ENCODE measurements at regions of chr17 and their contacts with region 1.

Region 1: DNA sequence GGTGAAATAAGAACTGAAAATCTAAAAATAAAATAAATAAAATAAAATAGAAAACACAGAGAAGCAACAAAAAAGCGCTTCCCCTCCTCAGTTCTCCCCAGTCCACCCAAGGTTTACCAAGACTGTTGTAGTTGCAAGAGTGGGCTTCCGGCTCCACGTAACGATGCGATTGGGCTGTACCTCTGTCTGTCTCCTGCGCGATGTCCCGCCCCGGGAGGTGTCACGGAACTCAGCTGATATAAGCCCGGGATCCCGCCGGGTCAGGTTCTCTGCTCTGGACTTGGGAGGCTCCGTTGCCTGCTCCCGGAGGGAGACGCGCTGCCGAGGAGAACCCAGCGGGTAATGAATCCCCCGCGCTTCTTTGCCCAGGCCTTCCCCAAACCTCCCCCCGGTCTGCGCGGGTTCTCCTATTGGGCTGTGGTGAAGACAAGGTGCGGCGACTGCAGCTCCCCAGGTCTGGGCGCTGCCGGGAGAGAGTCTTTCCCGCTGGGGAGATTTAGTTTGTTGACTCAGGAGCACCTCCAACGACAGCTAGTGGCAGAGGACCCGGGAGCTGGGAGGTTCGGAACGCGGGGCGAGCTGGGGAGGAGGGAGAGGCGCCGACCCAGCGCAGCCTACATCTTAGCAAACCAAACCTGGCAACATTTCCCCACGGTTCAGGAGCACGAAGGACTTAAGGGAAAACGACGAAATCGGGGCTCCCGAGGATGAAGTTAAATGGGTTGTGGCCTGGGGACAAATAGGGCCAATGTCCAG is at the start of gene SLFN5:
- DNase-seq: peak; percentile 94 to 96 (median 94)
- ATAC-seq: peak; percentile 96 to 98 (median 97)
- H3K4me3 ChIP-seq: peak within 1 kb of the TSS; percentile 50 to 95 (median 74)
- H3K27ac ChIP-seq: peak within 1 kb of the TSS; percentile 84 to 97 (median 94)
- H3K4me1 ChIP-seq: peaks cover 0 to 51% (median 19%) of the 10 kb centered on the region in 12 donors
- H3K27me3 ChIP-seq: no peaks in the 10 kb centered on the region
- CTCF ChIP-seq: no peak
- POLR2A ChIP-seq: peak in 1 of 2 donors; percentile 93
- total RNA-seq, gene SLFN5: 12.4 to 41.4 (median 15.0) TPM

Region 2: DNA sequence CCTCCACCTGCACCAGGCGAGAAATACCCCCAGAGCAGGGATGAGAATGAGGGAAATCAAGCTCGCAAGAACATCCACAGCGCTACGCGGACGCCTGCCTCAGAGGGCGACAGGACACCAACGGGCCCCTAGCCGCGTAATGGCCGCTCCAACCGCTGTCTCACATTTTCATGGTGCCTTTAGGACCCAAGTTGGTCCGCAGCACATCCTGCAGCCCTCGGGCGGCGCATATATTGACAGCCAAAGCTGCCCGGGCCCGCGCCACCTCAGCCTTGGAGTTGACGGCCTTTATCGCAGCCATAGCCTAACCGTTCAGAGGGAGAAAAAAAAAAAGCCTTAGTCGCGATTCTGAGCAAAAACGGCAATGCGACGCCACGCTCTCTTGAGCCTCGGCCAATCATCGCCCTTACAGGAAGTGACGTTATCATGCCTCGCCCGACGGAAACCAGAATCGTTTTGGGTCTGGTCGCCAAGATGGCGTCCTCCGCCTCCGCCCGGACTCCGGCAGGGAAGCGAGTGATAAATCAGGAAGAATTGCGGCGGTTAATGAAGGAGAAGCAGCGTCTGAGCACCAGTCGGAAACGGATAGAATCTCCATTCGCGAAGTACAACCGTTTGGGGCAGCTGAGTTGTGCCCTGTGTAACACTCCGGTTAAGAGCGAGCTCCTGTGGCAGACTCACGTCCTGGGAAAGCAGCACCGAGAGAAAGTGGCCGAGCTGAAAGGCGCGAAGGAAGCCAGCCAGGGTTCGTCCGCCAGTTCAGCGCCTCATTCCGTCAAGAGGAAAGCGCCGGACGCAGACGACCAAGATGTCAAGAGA is 281.7 kb before region 1 on chr17 and contains the starts of genes CCT6B and ZNF830:
- intact Hi-C with region 1: loop called in 2 of 10 experiments (anchors 5 kb)
- DNase-seq: peak; percentile 93 to 95 (median 93)
- ATAC-seq: peak; percentile 97 to 99 (median 98)
- H3K4me3 ChIP-seq: peak within 1 kb of the TSS; percentile 46 to 97 (median 88)
- H3K27ac ChIP-seq: peak within 1 kb of the TSS; percentile 90 to 98 (median 96)
- H3K4me1 ChIP-seq: peaks cover 0 to 27% (median 21%) of the 10 kb centered on the region in 12 donors
- H3K27me3 ChIP-seq: no peaks in the 10 kb centered on the region
- CTCF ChIP-seq: peak in 2 of 12 donors; percentile 4 to 5
- POLR2A ChIP-seq: peak in 1 of 2 donors; percentile 58
- total RNA-seq, gene CCT6B: 0.75 to 2.5 (median 1.9) TPM
- total RNA-seq, gene ZNF830: 5.7 to 10.1 (median 7.9) TPM

Region 3: GRCh38 chr17:35141681-35142466 is 101.1 kb before region 1 on chr17 and contains the start of gene NLE1:
- intact Hi-C with region 1: loop called in 3 of 10 experiments (anchors 1 to 5 kb)
- DNase-seq: peak; percentile 81 to 91 (median 84)
- ATAC-seq: peak; percentile 74 to 93 (median 90)
- H3K4me3 ChIP-seq: peak within 1 kb of the TSS; percentile 40 to 88 (median 81)
- H3K27ac ChIP-seq: peak within 1 kb of the TSS in 3 of 12 donors; percentile 3 to 47 (median 29)
- H3K4me1 ChIP-seq: peaks cover 0 to 25% (median 15%) of the 10 kb centered on the region in 12 donors
- H3K27me3 ChIP-seq: no peaks in the 10 kb centered on the region
- CTCF ChIP-seq: peak in 11 of 12 donors; percentile 89 to 98 (median 94)
- POLR2A ChIP-seq: peak in 1 of 2 donors; percentile 34
- total RNA-seq, gene NLE1: 2.8 to 8.0 (median 4.2) TPM

Region 4: GRCh38 chr17:35170968-35171771 is 71.8 kb before region 1 on chr17:
- intact Hi-C with region 1: loop called in 2 of 10 experiments (anchors 5 to 10 kb)
- DNase-seq: no peak
- ATAC-seq: peak in 2 of 4 donors; percentile 14 to 23
- H3K4me3 ChIP-seq: no peak overlapping the region
- H3K27ac ChIP-seq: no peak overlapping the region
- H3K4me1 ChIP-seq: peaks cover 0 to 11% (median 0%) of the 10 kb centered on the region in 12 donors
- H3K27me3 ChIP-seq: no peaks in the 10 kb centered on the region
- CTCF ChIP-seq: peak in 9 of 12 donors; percentile 13 to 53 (median 33)
- POLR2A ChIP-seq: no peak

Region 5: GRCh38 chr17:35286120-35286781 is 43.3 kb after region 1 on chr17:
- intact Hi-C with region 1: no loop called
- DNase-seq: no peak
- ATAC-seq: no peak
- H3K4me3 ChIP-seq: no peak overlapping the region
- H3K27ac ChIP-seq: no peak overlapping the region
- H3K4me1 ChIP-seq: peaks cover 0 to 13% (median 0%) of the 10 kb centered on the region in 12 donors
- H3K27me3 ChIP-seq: peaks cover 0 to 8% (median 0%) of the 10 kb centered on the region in 9 donors
- CTCF ChIP-seq: no peak
- POLR2A ChIP-seq: no peak

Region 6: GRCh38 chr17:35373534-35373983 is 130.6 kb after region 1 on chr17 and contains the start of gene SLFN11:
- intact Hi-C with region 1: loop called in 1 of 10 experiments (anchors 10 kb)
- DNase-seq: peak; percentile 90 to 92 (median 91)
- ATAC-seq: peak; percentile 91 to 98 (median 93)
- H3K4me3 ChIP-seq: peak within 1 kb of the TSS; percentile 27 to 82 (median 72)
- H3K27ac ChIP-seq: peak within 1 kb of the TSS; percentile 92 to 98 (median 95)
- H3K4me1 ChIP-seq: peaks cover 0 to 65% (median 13%) of the 10 kb centered on the region in 12 donors
- H3K27me3 ChIP-seq: peaks cover 0 to 20% (median 0%) of the 10 kb centered on the region in 9 donors
- CTCF ChIP-seq: no peak
- POLR2A ChIP-seq: peak; percentile 84 to 98
- total RNA-seq, gene SLFN11: 15.3 to 46.0 (median 17.5) TPM

Region 7: GRCh38 chr17:35432176-35433074 is 189.4 kb after region 1 on chr17 and contains the start of gene SLFN12:
- intact Hi-C with region 1: loop called in 2 of 10 experiments (anchors 2 to 5 kb)
- DNase-seq: peak in 4 of 5 donors; percentile 61 to 74 (median 68)
- ATAC-seq: peak; percentile 70 to 93 (median 89)
- H3K4me3 ChIP-seq: peak within 1 kb of the TSS; percentile 49 to 81 (median 68)
- H3K27ac ChIP-seq: peak within 1 kb of the TSS; percentile 86 to 97 (median 93)
- H3K4me1 ChIP-seq: peaks cover 0 to 42% (median 19%) of the 10 kb centered on the region in 12 donors
- H3K27me3 ChIP-seq: no peaks in the 10 kb centered on the region
- CTCF ChIP-seq: no peak
- POLR2A ChIP-seq: peak in 1 of 2 donors; percentile 51
- total RNA-seq, gene SLFN12: 3.3 to 10.0 (median 4.5) TPM

Measured in heart left ventricle (tissue), 16 donors.